ENCODE measurements at regions of chr6 and their contacts with region 1.

Region 1: DNA sequence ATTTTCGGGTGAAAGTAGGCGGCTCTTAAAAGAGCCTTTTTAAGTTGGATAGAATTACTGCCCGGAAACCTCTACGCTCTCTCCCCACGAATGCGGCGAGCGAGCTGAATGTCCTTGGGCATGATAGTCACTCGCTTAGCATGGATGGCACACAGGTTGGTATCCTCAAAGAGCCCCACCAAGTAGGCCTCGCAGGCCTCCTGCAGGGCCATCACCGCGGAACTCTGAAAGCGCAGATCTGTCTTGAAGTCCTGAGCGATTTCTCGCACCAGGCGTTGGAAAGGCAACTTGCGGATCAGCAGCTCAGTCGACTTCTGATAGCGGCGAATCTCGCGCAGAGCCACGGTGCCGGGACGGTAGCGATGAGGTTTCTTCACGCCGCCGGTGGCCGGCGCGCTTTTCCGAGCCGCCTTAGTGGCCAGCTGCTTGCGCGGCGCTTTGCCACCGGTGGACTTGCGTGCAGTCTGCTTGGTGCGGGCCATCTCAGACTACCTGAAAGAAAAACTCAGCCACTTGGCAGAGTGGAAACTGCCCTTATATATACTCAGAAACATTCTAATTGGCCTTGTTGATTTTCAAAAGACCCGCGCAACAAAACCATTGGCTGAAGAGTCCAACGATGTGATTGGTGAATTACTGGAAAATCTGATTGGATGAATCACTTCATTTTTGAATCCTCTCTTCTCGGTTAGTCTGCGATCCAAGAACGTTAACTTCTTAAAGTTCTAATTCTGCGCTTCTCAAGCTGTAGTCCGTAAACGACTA is 93.9 kb upstream of the BTN3A2 start:
- DNase-seq: peak; percentile 77
- H3K4me3 ChIP-seq: peak overlapping the region in 3 of 4 donors; percentile 31 to 45 (median 45)
- H3K27ac ChIP-seq: peak overlapping the region; percentile 83 to 91 (median 86)
- H3K4me1 ChIP-seq: peaks cover 0 to 25% (median 22%) of the 10 kb centered on the region in 4 donors
- H3K27me3 ChIP-seq: peaks cover 10 to 61% (median 32%) of the 10 kb centered on the region in 3 donors
- CTCF ChIP-seq: no peak
- EP300 ChIP-seq: no peak
- POLR2A ChIP-seq: no peak

Region 2: GRCh38 chr6:26234421-26235296 is 36.4 kb before region 1 on chr6:
- intact Hi-C with region 1: loop called (anchors 5 kb)
- DNase-seq: peak; percentile 89
- H3K4me3 ChIP-seq: peak overlapping the region; percentile 45 to 57 (median 55)
- H3K27ac ChIP-seq: peak overlapping the region; percentile 81 to 90 (median 86)
- H3K4me1 ChIP-seq: peaks cover 0 to 20% (median 13%) of the 10 kb centered on the region in 4 donors
- H3K27me3 ChIP-seq: peaks cover 7 to 66% (median 24%) of the 10 kb centered on the region in 3 donors
- CTCF ChIP-seq: no peak
- EP300 ChIP-seq: peak; percentile 33 to 88 (median 62)
- POLR2A ChIP-seq: peak; percentile 96 to 98

Region 3: DNA sequence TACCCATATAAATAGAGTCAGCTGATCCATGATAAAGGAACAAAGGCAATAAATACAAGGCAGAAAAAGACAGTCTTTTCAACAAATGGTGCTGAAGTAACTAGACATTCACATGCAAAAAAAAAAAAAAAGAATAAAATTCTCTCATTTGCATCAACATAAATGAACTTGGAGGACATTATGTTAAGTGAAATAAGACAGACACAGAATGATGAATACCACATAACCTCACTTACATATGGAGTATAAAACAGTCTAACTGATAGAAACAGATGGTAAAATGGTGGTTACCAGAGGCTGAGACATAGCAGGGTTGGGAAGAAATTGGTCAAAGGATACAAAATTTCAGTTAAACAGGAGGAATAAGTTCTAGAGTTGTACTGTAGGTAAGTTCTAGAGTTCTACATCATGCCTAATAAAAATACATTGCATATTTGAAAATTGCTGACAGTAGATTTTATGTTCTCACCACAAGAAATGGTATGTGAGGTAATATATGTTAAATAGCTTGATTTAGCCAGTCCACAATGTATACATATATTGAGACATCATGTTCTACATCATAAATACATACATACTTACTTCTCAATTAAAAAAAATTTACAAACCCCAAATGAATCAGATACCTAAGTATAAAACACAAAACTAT is 380.2 kb after region 1 on chr6:
- intact Hi-C with region 1: no loop called
- DNase-seq: no peak
- H3K4me3 ChIP-seq: no peak overlapping the region
- H3K27ac ChIP-seq: no peak overlapping the region
- H3K4me1 ChIP-seq: peaks cover 0 to 9% (median 3%) of the 10 kb centered on the region in 4 donors
- H3K27me3 ChIP-seq: no peaks in the 10 kb centered on the region
- CTCF ChIP-seq: no peak
- EP300 ChIP-seq: no peak
- POLR2A ChIP-seq: no peak

Measured in sigmoid colon (tissue), 7 donors.